Sciatic nerve (tissue), 2 donors: ENCODE measurements at regions of chr6 and their contacts with region 1.

Region 1: GRCh38 chr6:117615894-117616390 is 13.6 kb upstream of the GOPC start:
- DNase-seq: no peak
- ATAC-seq: no peak

Region 2: GRCh38 chr6:117373211-117373813 is 242.6 kb before region 1 on chr6:
- intact Hi-C with region 1: no loop called
- DNase-seq: no peak
- ATAC-seq: no peak

Region 3: GRCh38 chr6:117629119-117629518 is 13.2 kb after region 1 on chr6:
- intact Hi-C with region 1: loop called (anchors 1 kb)
- DNase-seq: no peak
- ATAC-seq: no peak